ENCODE measurements at regions of chr12 and their contacts with region 1.

Region 1: DNA sequence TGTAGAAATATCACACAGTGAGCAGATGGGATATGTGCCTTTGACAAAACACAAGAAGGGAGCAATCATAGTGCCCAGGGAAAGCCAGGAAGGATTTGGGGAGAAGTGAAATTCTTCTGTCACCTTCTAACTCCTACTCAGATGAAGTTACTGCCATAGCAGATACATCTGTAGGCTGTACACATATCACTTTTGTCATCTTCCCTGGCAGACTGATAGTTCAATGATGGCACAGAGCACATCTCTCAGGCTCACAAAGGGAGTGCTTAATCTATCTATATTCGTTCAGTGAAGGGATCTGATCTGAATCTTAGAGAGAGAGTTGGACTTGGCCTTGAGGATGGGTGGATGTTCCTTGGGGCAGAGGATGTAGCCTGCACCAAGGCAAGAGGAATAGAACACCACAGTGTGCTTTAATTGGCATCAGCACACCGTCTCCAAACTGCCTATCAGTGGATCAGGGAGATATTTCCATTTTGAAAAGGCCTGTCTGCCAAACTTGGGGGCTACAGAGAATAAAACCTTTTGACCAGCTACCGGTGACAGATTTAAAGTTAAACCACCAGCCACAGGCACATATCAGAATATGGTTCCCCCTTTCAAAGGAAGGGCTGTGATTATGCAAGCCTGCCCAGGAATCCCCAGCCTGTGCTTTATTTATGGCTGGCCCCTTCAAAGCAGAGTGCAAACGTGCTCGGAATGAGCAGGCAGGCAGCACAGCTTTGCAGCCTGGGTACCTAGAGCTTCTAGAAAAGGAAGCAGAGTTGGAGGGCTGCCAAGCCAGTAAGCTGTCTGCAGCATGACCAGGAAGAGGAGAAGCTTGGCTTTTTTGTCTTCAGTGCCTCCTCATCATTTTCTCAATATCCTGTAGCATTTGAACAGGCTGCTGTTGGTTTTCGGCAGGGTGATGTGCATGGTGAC is 165.5 kb upstream of the DYRK2 start:
- DNase-seq: peak; percentile 95
- H3K4me3 Mint-ChIP-seq: no peak overlapping the region
- H3K27ac Mint-ChIP-seq: no peak overlapping the region
- H3K4me1 Mint-ChIP-seq: peaks cover 40% of the 10 kb centered on the region
- H3K27me3 Mint-ChIP-seq: no peaks in the 10 kb centered on the region

Region 2: DNA sequence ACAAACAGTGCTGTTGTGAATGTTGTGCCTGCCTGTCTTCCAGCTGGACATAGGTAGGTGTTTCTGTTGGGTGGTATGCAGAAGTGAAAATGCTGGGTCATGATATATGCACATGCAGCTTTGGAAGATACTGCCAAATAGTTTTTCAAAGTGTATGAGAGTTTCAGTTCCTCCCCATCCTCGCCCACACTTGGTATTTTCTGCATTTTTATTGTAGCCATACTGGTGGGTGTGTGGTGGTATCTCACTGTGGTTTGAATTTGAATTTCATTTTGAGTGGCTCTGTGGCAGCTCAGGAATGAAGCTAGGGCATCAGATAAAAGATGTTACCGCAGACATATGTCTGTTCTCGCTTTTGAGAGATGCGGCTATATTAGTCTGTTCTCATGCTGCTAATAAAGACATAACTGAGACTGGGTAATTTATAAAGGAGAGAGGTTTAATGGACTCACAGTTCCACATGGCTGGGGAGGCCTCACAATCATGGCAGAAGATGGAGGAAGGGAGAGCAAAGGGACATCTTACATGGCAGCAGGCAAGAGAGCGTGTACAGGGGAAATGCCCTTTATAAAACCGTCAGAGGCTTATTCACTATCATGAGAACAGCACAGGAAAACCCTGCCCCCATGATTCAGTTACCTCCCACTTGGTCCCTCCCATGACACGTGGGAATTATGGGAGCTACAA is 30.7 kb before region 1 on chr12:
- CTCF ChIA-PET with region 1: no interaction called
- intact Hi-C with region 1: loop called (anchors 1 kb)
- DNase-seq: no peak
- H3K4me3 Mint-ChIP-seq: no peak overlapping the region
- H3K27ac Mint-ChIP-seq: no peak overlapping the region
- H3K4me1 Mint-ChIP-seq: peaks cover 47% of the 10 kb centered on the region
- H3K27me3 Mint-ChIP-seq: peaks cover 2% of the 10 kb centered on the region

Region 3: GRCh38 chr12:67515679-67516340 is 32.8 kb after region 1 on chr12:
- CTCF ChIA-PET with region 1: no interaction called
- intact Hi-C with region 1: loop called (anchors 1 kb)
- DNase-seq: peak; percentile 51
- H3K4me3 Mint-ChIP-seq: no peak overlapping the region
- H3K27ac Mint-ChIP-seq: no peak overlapping the region
- H3K4me1 Mint-ChIP-seq: peaks cover 34% of the 10 kb centered on the region
- H3K27me3 Mint-ChIP-seq: no peaks in the 10 kb centered on the region

Region 4: GRCh38 chr12:67592216-67593011 is 109.4 kb after region 1 on chr12:
- CTCF ChIA-PET with region 1: no interaction called
- intact Hi-C with region 1: loop called (anchors 1 kb)
- DNase-seq: peak; percentile 32
- H3K4me3 Mint-ChIP-seq: no peak overlapping the region
- H3K27ac Mint-ChIP-seq: peak overlapping the region; percentile 22
- H3K4me1 Mint-ChIP-seq: peaks cover 49% of the 10 kb centered on the region
- H3K27me3 Mint-ChIP-seq: no peaks in the 10 kb centered on the region

Region 5: GRCh38 chr12:67630373-67631088 is 147.5 kb after region 1 on chr12:
- CTCF ChIA-PET with region 1: no interaction called
- intact Hi-C with region 1: loop called (anchors 1 kb)
- DNase-seq: peak; percentile 93
- H3K4me3 Mint-ChIP-seq: peak overlapping the region; percentile 33
- H3K27ac Mint-ChIP-seq: peak overlapping the region; percentile 79
- H3K4me1 Mint-ChIP-seq: peaks cover 81% of the 10 kb centered on the region
- H3K27me3 Mint-ChIP-seq: no peaks in the 10 kb centered on the region

Region 6: DNA sequence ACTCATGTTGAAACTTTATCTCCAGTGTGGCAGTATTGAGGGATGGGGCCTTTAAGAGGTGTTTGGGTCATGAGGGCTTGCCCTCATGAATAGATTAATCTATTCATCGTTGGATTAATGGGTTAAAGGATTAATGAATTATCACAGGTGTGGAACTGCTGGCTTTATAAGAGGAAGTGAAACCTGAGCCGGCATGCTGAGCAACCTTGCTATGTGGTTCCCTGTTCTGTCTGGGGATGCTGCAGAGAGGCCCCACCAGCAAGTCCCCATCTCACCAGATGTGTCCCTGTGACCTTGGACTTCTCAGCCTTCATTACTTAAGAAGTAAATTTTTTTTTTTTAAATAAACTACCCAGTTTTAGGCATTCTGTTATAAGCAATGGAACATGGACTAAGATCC is 275.1 kb after region 1 on chr12:
- CTCF ChIA-PET with region 1: no interaction called
- intact Hi-C with region 1: loop called (anchors 5 kb)
- DNase-seq: peak; percentile 9
- H3K4me3 Mint-ChIP-seq: no peak overlapping the region
- H3K27ac Mint-ChIP-seq: no peak overlapping the region
- H3K4me1 Mint-ChIP-seq: peaks cover 49% of the 10 kb centered on the region
- H3K27me3 Mint-ChIP-seq: no peaks in the 10 kb centered on the region

Region 7: DNA sequence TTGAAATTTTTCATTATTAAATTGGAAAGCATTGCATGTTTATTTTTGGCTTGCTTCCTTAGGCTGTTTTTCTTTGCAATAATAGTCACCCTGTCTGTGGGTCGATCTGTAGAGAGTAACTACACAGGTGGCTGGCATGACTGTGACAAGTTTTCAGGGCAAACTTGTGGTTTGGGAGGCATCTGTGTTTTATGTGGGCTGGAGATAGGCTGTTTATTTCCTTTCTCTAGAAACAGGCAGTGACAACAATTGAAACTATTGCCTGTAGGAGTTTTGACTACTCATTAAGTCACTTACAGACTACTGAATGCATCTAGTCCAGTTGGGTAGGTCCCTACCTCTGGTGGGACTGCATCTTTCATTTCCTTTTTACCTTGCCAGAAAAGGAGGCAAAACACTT is 321.2 kb after region 1 on chr12:
- CTCF ChIA-PET with region 1: no interaction called
- intact Hi-C with region 1: loop called (anchors 1 kb)
- DNase-seq: peak; percentile 73
- H3K4me3 Mint-ChIP-seq: no peak overlapping the region
- H3K27ac Mint-ChIP-seq: no peak overlapping the region
- H3K4me1 Mint-ChIP-seq: peaks cover 14% of the 10 kb centered on the region
- H3K27me3 Mint-ChIP-seq: no peaks in the 10 kb centered on the region